ENCODE measurements at regions of chr3 and their contacts with region 1.

Region 1: DNA sequence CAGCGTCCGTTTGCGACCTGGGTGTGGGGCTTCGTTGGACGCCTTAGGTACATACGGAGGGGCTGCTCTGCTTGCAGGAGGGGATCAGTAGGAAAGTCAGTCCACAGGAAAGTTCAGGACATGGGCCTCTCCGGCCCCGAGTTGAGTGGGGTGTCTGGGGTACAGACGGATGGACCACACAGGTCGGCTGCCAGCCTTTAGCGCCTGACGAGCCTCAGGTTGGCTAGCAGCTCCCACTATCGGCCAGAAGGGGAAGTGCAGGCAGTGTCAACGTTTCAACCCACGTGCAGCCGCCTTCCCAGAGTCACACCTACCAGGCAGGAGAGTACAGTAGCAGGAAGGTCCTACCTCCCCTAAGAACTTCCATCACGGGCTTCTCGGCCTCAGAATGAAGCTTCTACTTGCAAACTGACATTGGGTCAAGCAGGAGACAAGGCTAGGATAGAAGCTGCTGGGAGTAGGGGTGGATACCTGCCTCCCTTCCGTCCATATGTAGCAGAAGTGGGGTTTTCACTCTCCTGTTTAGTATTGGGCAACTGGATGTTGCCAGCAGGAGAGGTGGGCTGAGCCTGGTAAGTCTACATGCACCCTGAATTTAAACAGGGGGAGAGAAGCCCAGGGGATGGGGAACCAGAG is 1.8 kb upstream of the SCN5A start:
- DNase-seq: peak; percentile 77
- H3K4me3 Mint-ChIP-seq: no peak overlapping the region
- H3K27ac Mint-ChIP-seq: no peak overlapping the region
- H3K4me1 Mint-ChIP-seq: peaks cover 5% of the 10 kb centered on the region
- H3K27me3 Mint-ChIP-seq: peaks cover 23% of the 10 kb centered on the region

Region 2: DNA sequence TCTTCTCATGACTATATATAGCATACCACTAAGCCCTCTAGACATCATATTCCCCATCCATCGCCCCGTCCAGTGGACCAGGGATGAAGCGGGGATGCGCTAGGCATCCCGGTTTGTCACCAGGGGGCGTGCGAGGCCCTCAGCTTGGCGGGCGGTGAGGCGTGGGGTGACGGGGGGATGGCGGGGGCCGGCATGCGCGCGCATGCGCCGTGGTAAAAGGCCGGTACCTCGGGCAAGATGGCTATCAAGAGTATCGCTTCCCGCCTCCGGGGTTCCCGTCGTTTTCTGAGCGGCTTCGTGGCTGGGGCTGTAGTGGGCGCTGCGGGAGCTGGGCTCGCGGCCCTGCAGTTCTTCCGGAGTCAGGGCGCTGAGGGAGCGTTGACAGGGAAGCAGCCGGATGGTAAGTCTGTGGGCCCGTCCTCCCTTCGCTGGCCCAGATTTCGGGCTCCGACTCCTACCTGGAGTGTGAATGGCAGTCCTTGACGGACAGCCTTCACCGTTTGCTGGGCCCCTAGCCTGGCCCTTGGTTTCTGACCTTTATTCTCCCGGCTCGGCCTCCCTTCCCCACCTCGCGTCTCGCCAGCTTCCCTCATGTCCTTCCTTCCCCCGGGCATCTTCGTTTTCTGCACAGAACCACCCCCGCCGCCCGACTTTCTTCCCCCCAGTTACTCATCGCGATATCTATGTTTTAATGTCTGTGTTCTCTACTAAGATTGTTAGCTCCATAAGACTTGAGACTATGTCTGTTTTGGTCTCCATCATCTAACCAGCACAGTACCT is 155.0 kb before region 1 on chr3 and contains the start of gene EXOG:
- CTCF ChIA-PET with region 1: interaction called, 23 read pairs
- DNase-seq: peak; percentile 96
- H3K4me3 Mint-ChIP-seq: peak within 1 kb of the TSS; percentile 94
- H3K27ac Mint-ChIP-seq: peak within 1 kb of the TSS; percentile 81
- H3K4me1 Mint-ChIP-seq: peaks cover 27% of the 10 kb centered on the region
- H3K27me3 Mint-ChIP-seq: no peaks in the 10 kb centered on the region

Region 3: GRCh38 chr3:38662544-38662943 is 11.3 kb after region 1 on chr3:
- CTCF ChIA-PET with region 1: interaction called, 11 read pairs
- DNase-seq: peak; percentile 30
- H3K4me3 Mint-ChIP-seq: no peak overlapping the region
- H3K27ac Mint-ChIP-seq: no peak overlapping the region
- H3K4me1 Mint-ChIP-seq: no peaks in the 10 kb centered on the region
- H3K27me3 Mint-ChIP-seq: peaks cover 33% of the 10 kb centered on the region

Region 4: DNA sequence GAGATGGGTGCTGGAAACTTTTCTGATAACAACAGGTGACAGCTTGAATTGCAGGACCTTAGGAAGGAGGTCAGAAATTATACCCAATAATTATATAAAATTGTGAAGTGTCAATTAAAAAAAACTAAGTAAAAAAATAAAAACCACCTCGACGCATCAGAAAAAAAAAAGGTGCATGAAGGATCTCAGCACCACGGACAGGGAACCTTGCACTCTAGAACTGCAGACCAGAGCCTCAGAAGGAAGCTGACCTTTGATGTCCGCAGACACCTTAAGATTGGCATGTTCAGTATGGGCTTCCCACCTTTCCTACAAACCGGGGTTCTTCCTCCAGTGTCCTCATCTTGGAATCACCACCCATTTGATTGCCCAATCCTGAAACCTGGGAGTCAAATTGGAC is 103.9 kb after region 1 on chr3:
- CTCF ChIA-PET with region 1: no interaction called
- DNase-seq: no peak
- H3K4me3 Mint-ChIP-seq: no peak overlapping the region
- H3K27ac Mint-ChIP-seq: no peak overlapping the region
- H3K4me1 Mint-ChIP-seq: no peaks in the 10 kb centered on the region
- H3K27me3 Mint-ChIP-seq: peaks cover 4% of the 10 kb centered on the region

Region 5: DNA sequence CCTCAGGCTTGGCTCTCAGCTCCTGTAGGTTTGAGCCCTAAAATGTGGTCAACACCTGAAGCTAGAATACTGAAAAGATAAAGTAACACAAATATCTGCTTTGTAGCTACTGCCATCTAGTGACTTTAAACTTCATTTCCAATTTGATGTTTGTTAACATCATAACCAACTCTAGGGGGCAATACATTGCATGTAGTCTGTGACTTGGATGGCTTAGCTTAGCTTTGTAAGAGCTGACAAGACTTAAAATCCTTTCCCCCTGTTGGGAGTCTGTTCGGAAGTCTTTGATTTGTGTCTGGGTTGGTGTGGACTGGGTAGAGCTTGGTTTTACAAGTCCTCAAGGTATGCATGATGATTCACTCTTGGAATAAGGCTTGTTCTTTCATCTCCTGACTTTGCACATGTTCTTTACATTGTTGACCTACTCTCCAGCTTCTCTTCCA is 348.8 kb after region 1 on chr3:
- CTCF ChIA-PET with region 1: interaction called, 13 read pairs
- DNase-seq: no peak
- H3K4me3 Mint-ChIP-seq: no peak overlapping the region
- H3K27ac Mint-ChIP-seq: no peak overlapping the region
- H3K4me1 Mint-ChIP-seq: no peaks in the 10 kb centered on the region
- H3K27me3 Mint-ChIP-seq: peaks cover 7% of the 10 kb centered on the region

Measured in activated naive CD4-positive, alpha-beta T cell treated with anti-CD3 and anti-CD28 coated beads, Interleukin-2, amount 10 ng/mL, durations not matched to agents 7 days and 5 days (primary cell).